ENCODE measurements at regions of chr7 and their contacts with region 1.

Region 1: GRCh38 chr7:92833024-92833765 is 3.2 kb downstream of the CDK6 start:
- DNase-seq: peak; percentile 91 to 94
- H3K4me3 ChIP-seq: peak overlapping the region; percentile 79
- H3K4me3 Mint-ChIP-seq: peak overlapping the region; percentile 86
- H3K27ac Mint-ChIP-seq: peak overlapping the region; percentile 77
- H3K4me1 ChIP-seq: peaks cover 24% of the 10 kb centered on the region
- H3K4me1 Mint-ChIP-seq: peaks cover 18% of the 10 kb centered on the region
- H3K27me3 ChIP-seq: no peaks in the 10 kb centered on the region
- H3K27me3 Mint-ChIP-seq: no peaks in the 10 kb centered on the region
- CTCF ChIP-seq: peak; percentile 91 to 93

Region 2: DNA sequence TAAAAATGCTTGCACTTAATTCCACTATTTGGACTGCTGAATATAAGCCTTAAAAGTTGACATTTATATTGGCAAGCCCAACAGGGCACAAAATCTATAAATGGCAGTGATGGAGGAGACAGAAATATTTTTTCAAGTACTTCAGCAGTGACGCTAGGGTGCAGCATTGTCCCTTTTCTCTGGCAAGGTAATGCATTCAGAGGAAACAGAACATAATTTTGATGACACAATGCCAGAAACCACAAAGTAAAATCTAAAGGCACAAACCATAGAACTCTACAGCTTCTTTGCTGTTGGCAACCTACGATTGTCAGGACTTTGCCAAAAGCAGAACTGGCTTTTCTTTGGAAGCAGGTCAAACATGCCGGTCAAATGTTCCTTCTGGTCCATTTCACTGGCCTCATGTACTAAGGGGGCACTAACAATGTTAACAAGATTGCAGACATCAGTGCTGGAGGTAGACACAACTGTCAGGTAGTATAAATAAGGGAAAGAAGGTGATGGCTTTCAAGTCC is 212.1 kb before region 1 on chr7:
- CTCF ChIA-PET with region 1: no interaction called
- POLR2A ChIA-PET with region 1: no interaction called
- intact Hi-C with region 1: loop called (anchors 1 kb)
- DNase-seq: peak; percentile 60 to 69
- H3K4me3 ChIP-seq: no peak overlapping the region
- H3K4me3 Mint-ChIP-seq: no peak overlapping the region
- H3K27ac Mint-ChIP-seq: peak overlapping the region; percentile 13
- H3K4me1 ChIP-seq: no peaks in the 10 kb centered on the region
- H3K4me1 Mint-ChIP-seq: peaks cover 7% of the 10 kb centered on the region
- H3K27me3 ChIP-seq: no peaks in the 10 kb centered on the region
- H3K27me3 Mint-ChIP-seq: no peaks in the 10 kb centered on the region
- CTCF ChIP-seq: peak; percentile 66 to 68

Region 3: GRCh38 chr7:92763636-92764423 is 69.4 kb before region 1 on chr7:
- CTCF ChIA-PET with region 1: interaction called, 3 read pairs
- POLR2A ChIA-PET with region 1: no interaction called
- intact Hi-C with region 1: loop called (anchors 2 kb)
- DNase-seq: peak; percentile 82 to 83
- H3K4me3 ChIP-seq: no peak overlapping the region
- H3K4me3 Mint-ChIP-seq: no peak overlapping the region
- H3K27ac Mint-ChIP-seq: peak overlapping the region; percentile 51
- H3K4me1 ChIP-seq: peaks cover 62% of the 10 kb centered on the region
- H3K4me1 Mint-ChIP-seq: peaks cover 41% of the 10 kb centered on the region
- H3K27me3 ChIP-seq: no peaks in the 10 kb centered on the region
- H3K27me3 Mint-ChIP-seq: no peaks in the 10 kb centered on the region
- CTCF ChIP-seq: no peak

Region 4: GRCh38 chr7:92880212-92881090 is 47.3 kb after region 1 on chr7:
- CTCF ChIA-PET with region 1: interaction called, 8 read pairs
- POLR2A ChIA-PET with region 1: no interaction called
- intact Hi-C with region 1: loop called (anchors 1 kb)
- DNase-seq: peak; percentile 66
- H3K4me3 ChIP-seq: no peak overlapping the region
- H3K4me3 Mint-ChIP-seq: no peak overlapping the region
- H3K27ac Mint-ChIP-seq: no peak overlapping the region
- H3K4me1 ChIP-seq: no peaks in the 10 kb centered on the region
- H3K4me1 Mint-ChIP-seq: peaks cover 6% of the 10 kb centered on the region
- H3K27me3 ChIP-seq: no peaks in the 10 kb centered on the region
- H3K27me3 Mint-ChIP-seq: peaks cover 7% of the 10 kb centered on the region
- CTCF ChIP-seq: peak; percentile 44 to 54

Region 5: GRCh38 chr7:92944633-92945032 is 111.4 kb after region 1 on chr7:
- CTCF ChIA-PET with region 1: no interaction called
- POLR2A ChIA-PET with region 1: no interaction called
- intact Hi-C with region 1: no loop called
- DNase-seq: no peak
- H3K4me3 ChIP-seq: no peak overlapping the region
- H3K4me3 Mint-ChIP-seq: no peak overlapping the region
- H3K27ac Mint-ChIP-seq: no peak overlapping the region
- H3K4me1 ChIP-seq: no peaks in the 10 kb centered on the region; the same call in 1 of the 2 replicates
- H3K4me1 Mint-ChIP-seq: peaks cover 8% of the 10 kb centered on the region
- H3K27me3 ChIP-seq: no peaks in the 10 kb centered on the region
- H3K27me3 Mint-ChIP-seq: no peaks in the 10 kb centered on the region
- CTCF ChIP-seq: no peak

Region 6: DNA sequence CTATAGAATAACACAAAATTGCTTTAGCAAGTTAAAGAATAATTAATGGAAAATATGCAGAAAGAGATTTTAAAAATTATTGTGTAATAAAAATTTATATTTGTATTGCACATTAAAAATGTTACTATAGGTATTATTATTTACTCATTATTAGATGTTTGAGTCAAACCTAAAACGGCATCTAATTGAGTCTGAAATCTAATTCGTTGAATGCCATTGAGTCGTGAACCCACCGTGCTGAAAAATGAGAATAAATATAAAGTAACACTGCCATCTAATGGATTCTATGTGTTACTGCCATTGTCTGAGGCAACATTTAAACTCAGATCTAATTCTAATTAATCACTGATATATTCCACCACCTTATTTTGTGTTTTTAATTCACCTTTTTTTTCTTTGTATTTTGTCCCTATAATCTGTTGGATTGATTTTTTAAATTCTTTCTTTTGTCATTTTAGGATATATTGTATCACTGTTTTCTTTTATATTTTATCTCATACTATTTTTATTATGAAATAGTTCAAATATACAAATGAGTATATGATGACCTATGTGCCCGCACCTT is 222.4 kb after region 1 on chr7:
- CTCF ChIA-PET with region 1: no interaction called
- POLR2A ChIA-PET with region 1: no interaction called
- intact Hi-C with region 1: loop called (anchors 1 kb)
- DNase-seq: peak in 1 of 2 experiments; percentile 21
- H3K4me3 ChIP-seq: no peak overlapping the region
- H3K4me3 Mint-ChIP-seq: no peak overlapping the region
- H3K27ac Mint-ChIP-seq: no peak overlapping the region
- H3K4me1 ChIP-seq: no peaks in the 10 kb centered on the region
- H3K4me1 Mint-ChIP-seq: no peaks in the 10 kb centered on the region
- H3K27me3 ChIP-seq: no peaks in the 10 kb centered on the region
- H3K27me3 Mint-ChIP-seq: no peaks in the 10 kb centered on the region
- CTCF ChIP-seq: peak; percentile 50 to 76

Measured in Caco-2 (cell line).